Naive thymus-derived CD4-positive, alpha-beta T cell (primary cell): ENCODE measurements at regions of chr5 and their contacts with region 1.

Region 1: GRCh38 chr5:138464008-138464387 is 1.3 kb upstream of the EGR1 start:
- DNase-seq: peak; percentile 90 to 97 (median 94)
- ATAC-seq: peak; percentile 71
- H3K4me3 ChIP-seq: peak overlapping the region; percentile 95
- H3K4me3 Mint-ChIP-seq: peak overlapping the region; percentile 78 to 93 (median 89)
- H3K27ac ChIP-seq: peak overlapping the region; percentile 91
- H3K27ac Mint-ChIP-seq: peak overlapping the region; percentile 76 to 97 (median 91)
- H3K4me1 ChIP-seq: peaks cover 31 to 43% of the 10 kb centered on the region in 2 donors
- H3K4me1 Mint-ChIP-seq: peaks cover 36 to 54% (median 50%) of the 10 kb centered on the region in 7 donors
- H3K27me3 ChIP-seq: no peaks in the 10 kb centered on the region
- H3K27me3 Mint-ChIP-seq: peaks cover 0 to 20% (median 0%) of the 10 kb centered on the region in 5 donors

Region 2: DNA sequence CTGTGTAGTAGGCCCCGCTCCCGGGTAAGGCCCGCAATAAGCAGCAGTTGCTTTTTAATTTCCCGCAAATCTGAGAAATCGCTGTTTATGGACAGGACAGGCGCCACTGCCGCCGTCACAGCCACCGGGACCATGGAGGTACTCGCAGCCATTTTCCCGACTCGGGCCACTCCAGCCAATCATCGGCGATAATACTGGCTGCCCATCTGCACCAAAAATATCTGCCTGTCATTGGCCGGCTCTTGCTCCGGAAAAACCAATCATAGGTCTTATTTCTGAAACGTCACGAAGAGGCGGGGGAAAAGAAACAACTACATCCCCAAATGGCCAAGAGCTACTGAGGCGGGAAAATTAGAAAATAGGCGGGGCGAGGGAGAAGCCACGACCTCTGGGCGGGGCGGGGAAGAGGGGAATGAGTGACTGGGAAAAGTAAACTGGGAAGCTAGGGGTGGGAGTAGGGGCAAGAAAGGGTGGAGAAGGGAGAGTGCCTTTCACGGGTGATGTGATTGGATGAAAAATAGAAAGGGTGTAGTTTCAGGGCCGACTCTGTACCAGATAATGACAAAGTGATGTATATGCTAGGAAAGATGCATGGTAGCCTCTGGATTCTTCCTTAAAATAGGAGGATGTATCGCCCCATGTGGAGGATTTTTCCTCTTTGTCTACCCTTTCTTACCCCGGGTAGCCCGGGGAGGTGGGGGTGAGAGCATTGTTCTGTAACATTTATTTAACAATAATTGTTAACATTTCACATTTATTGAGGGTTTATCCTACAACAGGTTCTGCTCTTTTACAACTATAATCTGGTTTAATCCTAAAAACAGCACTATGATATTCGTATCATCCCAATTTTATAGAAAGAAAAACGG is 250.6 kb before region 1 on chr5 and contains the start of gene CDC23:
- CTCF ChIA-PET with region 1: no interaction called
- POLR2A ChIA-PET with region 1: no interaction called
- intact Hi-C with region 1: loop called (anchors 1 kb)
- DNase-seq: peak; percentile 65 to 95 (median 92)
- ATAC-seq: peak; percentile 98
- H3K4me3 ChIP-seq: peak within 1 kb of the TSS; percentile 97
- H3K4me3 Mint-ChIP-seq: peak within 1 kb of the TSS; percentile 92 to 99 (median 98)
- H3K27ac ChIP-seq: peak within 1 kb of the TSS; percentile 91
- H3K27ac Mint-ChIP-seq: peak within 1 kb of the TSS; percentile 95 to 98 (median 96)
- H3K4me1 ChIP-seq: peaks cover 0 to 8% of the 10 kb centered on the region in 2 donors
- H3K4me1 Mint-ChIP-seq: peaks cover 14 to 32% (median 27%) of the 10 kb centered on the region in 7 donors
- H3K27me3 ChIP-seq: no peaks in the 10 kb centered on the region
- H3K27me3 Mint-ChIP-seq: no peaks in the 10 kb centered on the region
- total RNA-seq, gene CDC23: 13.0 to 39.6 (median 25.5) TPM

Region 3: GRCh38 chr5:138352071-138352721 is 111.8 kb before region 1 on chr5 and contains the start of gene KDM3B:
- CTCF ChIA-PET with region 1: interaction called, 5 read pairs
- POLR2A ChIA-PET with region 1: interaction called, 8 read pairs
- intact Hi-C with region 1: loop called (anchors 1 to 2 kb)
- DNase-seq: peak; percentile 82 to 100 (median 96)
- ATAC-seq: peak; percentile 96
- H3K4me3 ChIP-seq: peak within 1 kb of the TSS; percentile 93
- H3K4me3 Mint-ChIP-seq: peak within 1 kb of the TSS; percentile 88 to 98 (median 96)
- H3K27ac ChIP-seq: peak within 1 kb of the TSS; percentile 91
- H3K27ac Mint-ChIP-seq: peak within 1 kb of the TSS; percentile 90 to 98 (median 96)
- H3K4me1 ChIP-seq: peaks cover 18 to 32% of the 10 kb centered on the region in 2 donors
- H3K4me1 Mint-ChIP-seq: peaks cover 30 to 54% (median 48%) of the 10 kb centered on the region in 7 donors
- H3K27me3 ChIP-seq: no peaks in the 10 kb centered on the region
- H3K27me3 Mint-ChIP-seq: no peaks in the 10 kb centered on the region
- total RNA-seq, gene KDM3B: 67.7 to 90.2 (median 82.8) TPM

Region 4: DNA sequence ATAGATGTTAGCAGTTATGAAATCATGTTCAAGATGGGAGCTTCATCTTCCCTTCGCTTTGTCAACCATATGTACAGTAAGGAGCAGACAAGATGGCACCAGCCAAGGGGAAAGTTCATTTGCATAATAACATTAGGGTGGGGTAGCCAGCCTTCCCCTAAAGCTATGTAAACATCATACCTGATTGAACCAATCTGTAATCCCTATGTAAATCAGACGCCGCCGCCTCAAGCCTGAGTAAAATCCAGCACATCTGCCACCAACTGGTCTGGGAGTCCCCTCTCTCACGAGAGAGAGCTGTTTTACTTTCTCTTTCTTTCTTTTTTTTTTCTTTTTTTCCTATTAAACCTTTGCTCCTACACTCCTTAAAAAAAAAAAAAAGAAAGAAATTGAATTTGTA is 56.0 kb before region 1 on chr5:
- CTCF ChIA-PET with region 1: no interaction called
- POLR2A ChIA-PET with region 1: no interaction called
- intact Hi-C with region 1: no loop called
- DNase-seq: no peak
- ATAC-seq: peak; percentile 26
- H3K4me3 ChIP-seq: no peak overlapping the region
- H3K4me3 Mint-ChIP-seq: no peak overlapping the region
- H3K27ac ChIP-seq: no peak overlapping the region
- H3K27ac Mint-ChIP-seq: peak overlapping the region in 4 of 9 donors; percentile 0 to 43 (median 23)
- H3K4me1 ChIP-seq: no peaks in the 10 kb centered on the region
- H3K4me1 Mint-ChIP-seq: peaks cover 0 to 15% (median 0%) of the 10 kb centered on the region in 7 donors
- H3K27me3 ChIP-seq: no peaks in the 10 kb centered on the region
- H3K27me3 Mint-ChIP-seq: no peaks in the 10 kb centered on the region

Region 5: DNA sequence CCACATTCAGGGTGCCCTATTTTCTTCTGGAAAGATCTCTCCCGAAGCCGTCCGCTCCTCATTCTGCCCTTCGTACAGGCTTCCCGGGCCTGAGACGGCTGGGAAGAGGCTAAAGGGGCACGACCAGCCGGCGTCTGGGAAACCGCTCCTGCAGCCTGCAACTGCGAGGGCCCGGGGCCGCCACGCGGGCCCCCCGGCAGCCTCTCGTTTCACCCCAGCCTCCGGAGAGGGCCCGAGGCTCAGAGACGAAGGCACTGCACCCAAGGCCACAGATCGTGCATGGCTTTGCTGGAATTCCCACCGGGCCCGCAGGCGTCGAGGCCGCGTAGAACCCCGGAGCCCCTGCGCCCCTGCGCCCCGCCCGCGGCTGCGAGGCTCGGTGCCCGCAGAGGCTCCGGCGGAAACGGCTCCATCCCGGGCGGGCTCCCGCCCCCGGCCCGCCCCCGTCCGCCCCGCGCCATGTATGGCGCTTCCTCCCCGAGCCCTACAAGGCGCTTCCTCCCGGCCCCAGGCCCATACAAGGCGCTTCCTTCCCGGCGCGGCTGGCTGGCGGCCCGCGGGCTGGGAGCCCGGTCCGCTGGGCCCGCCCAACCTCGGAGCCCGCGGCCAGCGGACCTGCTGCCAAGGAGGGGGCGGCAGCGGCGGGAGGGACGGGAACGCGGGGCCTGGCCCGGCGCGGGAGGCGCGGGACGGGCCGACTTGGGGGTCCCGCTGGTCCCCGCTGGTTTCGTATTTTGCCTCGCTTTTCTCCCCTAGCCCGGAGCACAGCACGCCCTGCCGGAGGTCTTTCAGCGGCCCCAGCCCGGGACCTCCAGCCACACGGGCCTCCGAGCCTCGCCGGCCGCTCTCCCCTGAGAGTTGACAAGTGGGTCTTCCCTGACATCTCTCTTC is 27.9 kb after region 1 on chr5:
- CTCF ChIA-PET with region 1: interaction called, 5 read pairs
- POLR2A ChIA-PET with region 1: interaction called, 16 read pairs
- intact Hi-C with region 1: loop called (anchors 1 kb)
- DNase-seq: peak; percentile 66 to 87 (median 81)
- ATAC-seq: peak; percentile 99
- H3K4me3 ChIP-seq: peak overlapping the region; percentile 69
- H3K4me3 Mint-ChIP-seq: peak overlapping the region; percentile 76 to 97 (median 92)
- H3K27ac ChIP-seq: peak overlapping the region; percentile 37
- H3K27ac Mint-ChIP-seq: peak overlapping the region in 7 of 9 donors; percentile 40 to 90 (median 67)
- H3K4me1 ChIP-seq: peaks cover 13 to 14% of the 10 kb centered on the region in 2 donors
- H3K4me1 Mint-ChIP-seq: peaks cover 8 to 21% (median 13%) of the 10 kb centered on the region in 7 donors
- H3K27me3 ChIP-seq: peaks cover 0 to 6% of the 10 kb centered on the region in 2 donors
- H3K27me3 Mint-ChIP-seq: peaks cover 0 to 38% (median 5%) of the 10 kb centered on the region in 5 donors

Region 6: GRCh38 chr5:139341650-139342422 is 877.8 kb after region 1 on chr5 and contains the start of gene PAIP2:
- CTCF ChIA-PET with region 1: no interaction called
- POLR2A ChIA-PET with region 1: no interaction called
- intact Hi-C with region 1: loop called in 1 of 2 experiments (anchors 2 kb)
- DNase-seq: peak; percentile 94 to 98 (median 97)
- ATAC-seq: peak; percentile 95
- H3K4me3 ChIP-seq: peak within 1 kb of the TSS; percentile 96
- H3K4me3 Mint-ChIP-seq: peak within 1 kb of the TSS; percentile 95 to 100 (median 98)
- H3K27ac ChIP-seq: peak within 1 kb of the TSS; percentile 98
- H3K27ac Mint-ChIP-seq: peak within 1 kb of the TSS; percentile 96 to 100 (median 99)
- H3K4me1 ChIP-seq: peaks cover 28 to 30% of the 10 kb centered on the region in 2 donors
- H3K4me1 Mint-ChIP-seq: peaks cover 34 to 65% (median 55%) of the 10 kb centered on the region in 7 donors
- H3K27me3 ChIP-seq: no peaks in the 10 kb centered on the region
- H3K27me3 Mint-ChIP-seq: peaks cover 0 to 5% (median 0%) of the 10 kb centered on the region in 5 donors
- total RNA-seq, gene PAIP2: 88.8 to 121 (median 106) TPM

Region 7: GRCh38 chr5:140113699-140114263 is 1649.8 kb after region 1 on chr5 and contains the start of gene PURA:
- CTCF ChIA-PET with region 1: no interaction called
- POLR2A ChIA-PET with region 1: no interaction called
- intact Hi-C with region 1: loop called in 1 of 2 experiments (anchors 10 kb)
- DNase-seq: peak; percentile 94 to 98 (median 97)
- ATAC-seq: peak; percentile 93
- H3K4me3 ChIP-seq: peak within 1 kb of the TSS; percentile 77
- H3K4me3 Mint-ChIP-seq: peak within 1 kb of the TSS; percentile 86 to 97 (median 94)
- H3K27ac ChIP-seq: peak within 1 kb of the TSS; percentile 89
- H3K27ac Mint-ChIP-seq: peak within 1 kb of the TSS; percentile 88 to 99 (median 95)
- H3K4me1 ChIP-seq: peaks cover 46 to 57% of the 10 kb centered on the region in 2 donors
- H3K4me1 Mint-ChIP-seq: peaks cover 53 to 95% (median 77%) of the 10 kb centered on the region in 7 donors
- H3K27me3 ChIP-seq: peaks cover 0 to 7% of the 10 kb centered on the region in 2 donors
- H3K27me3 Mint-ChIP-seq: peaks cover 0 to 46% (median 4%) of the 10 kb centered on the region in 5 donors
- total RNA-seq, gene PURA: 11.6 to 33.5 (median 13.9) TPM